AG04449 (cell line): ENCODE measurements at regions of chr17 and their contacts with region 1.

Region 1: GRCh38 chr17:48724251-48725003 is 1.4 kb downstream of the PRAC2 start:
- DNase-seq: no peak
- H3K4me3 ChIP-seq: no peak overlapping the region
- CTCF ChIP-seq: peak; percentile 83

Region 2: DNA sequence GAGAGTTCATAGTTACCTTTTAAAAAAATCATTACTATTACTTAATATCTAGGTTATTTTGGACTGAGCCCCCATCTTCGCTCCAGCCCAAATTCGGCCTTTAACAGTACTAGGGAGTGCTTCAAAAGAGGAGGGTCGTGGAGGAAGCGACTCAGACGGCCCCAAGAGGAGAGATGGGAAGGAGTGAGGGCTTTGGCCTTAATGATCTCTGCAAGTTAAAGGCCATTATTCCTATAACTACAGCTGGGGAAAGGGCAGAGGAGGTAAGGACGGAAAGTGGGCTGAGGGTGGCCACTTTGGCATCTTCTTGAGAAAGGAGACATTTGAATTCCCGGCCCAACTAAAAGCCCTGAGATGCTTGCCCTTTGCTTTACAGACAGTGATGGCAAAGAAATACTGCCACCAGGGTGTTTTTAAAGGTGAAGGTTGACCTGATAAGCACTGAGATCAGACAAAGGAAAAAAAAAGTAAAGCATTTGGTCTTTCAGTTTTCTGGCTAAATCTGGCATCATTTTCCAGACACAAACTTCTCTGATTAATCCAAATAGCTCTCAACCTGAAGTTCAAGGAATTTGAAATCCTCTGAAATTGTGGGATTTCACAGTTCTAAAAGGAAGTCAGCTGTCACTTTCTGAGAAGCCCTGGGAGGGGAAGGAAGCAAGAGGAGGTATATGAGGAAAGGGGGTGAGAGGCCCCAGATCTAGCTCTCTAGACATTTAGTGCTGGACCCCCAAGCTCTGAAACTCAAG is 81.0 kb before region 1 on chr17:
- CTCF ChIA-PET with region 1: no interaction called
- POLR2A ChIA-PET with region 1: no interaction called
- DNase-seq: no peak
- H3K4me3 ChIP-seq: no peak overlapping the region
- CTCF ChIP-seq: no peak

Region 3: GRCh38 chr17:48738803-48739526 is 14.5 kb after region 1 on chr17:
- CTCF ChIA-PET with region 1: interaction called, 72 read pairs
- POLR2A ChIA-PET with region 1: no interaction called
- DNase-seq: no peak
- H3K4me3 ChIP-seq: no peak overlapping the region
- CTCF ChIP-seq: no peak

Region 4: GRCh38 chr17:48751172-48751571 is 26.7 kb after region 1 on chr17:
- CTCF ChIA-PET with region 1: interaction called, 22 read pairs
- POLR2A ChIA-PET with region 1: interaction called, 5 read pairs
- DNase-seq: no peak
- H3K4me3 ChIP-seq: no peak overlapping the region
- CTCF ChIP-seq: no peak

Region 5: GRCh38 chr17:48804925-48805411 is 80.5 kb after region 1 on chr17:
- CTCF ChIA-PET with region 1: interaction called, 54 read pairs
- POLR2A ChIA-PET with region 1: no interaction called
- DNase-seq: no peak
- H3K4me3 ChIP-seq: no peak overlapping the region
- CTCF ChIP-seq: peak; percentile 91